ENCODE measurements at regions of chr3 and their contacts with region 1.

Region 1: GRCh38 chr3:40996382-40996781 is 202.9 kb upstream of the CTNNB1 start:
- DNase-seq: no peak
- H3K4me3 Mint-ChIP-seq: no peak overlapping the region
- H3K27ac Mint-ChIP-seq: no peak overlapping the region
- H3K4me1 Mint-ChIP-seq: no peaks in the 10 kb centered on the region
- H3K27me3 Mint-ChIP-seq: peaks cover 5% of the 10 kb centered on the region

Region 2: DNA sequence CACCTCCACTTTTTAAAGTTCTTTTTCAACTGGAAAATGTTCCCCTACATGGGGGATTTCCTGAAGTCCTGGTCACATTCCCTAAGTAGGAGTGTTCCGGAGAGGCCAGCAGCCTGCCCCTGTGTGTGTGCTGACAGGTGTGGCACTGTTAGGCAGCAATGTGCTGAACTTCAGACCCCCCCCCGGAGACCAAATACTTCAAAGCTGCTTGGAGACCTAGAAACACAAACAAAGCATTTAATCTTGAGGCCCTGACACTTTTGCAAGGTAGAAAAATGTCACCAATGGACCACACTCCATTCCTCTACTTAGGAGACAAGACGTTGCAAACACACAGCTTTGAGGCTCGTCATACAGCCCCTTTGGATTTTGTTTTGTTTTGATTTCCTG is 56.6 kb before region 1 on chr3:
- intact Hi-C with region 1: loop called (anchors 10 kb)
- DNase-seq: no peak
- H3K4me3 Mint-ChIP-seq: no peak overlapping the region
- H3K27ac Mint-ChIP-seq: no peak overlapping the region
- H3K4me1 Mint-ChIP-seq: no peaks in the 10 kb centered on the region
- H3K27me3 Mint-ChIP-seq: peaks cover 3% of the 10 kb centered on the region

Region 3: DNA sequence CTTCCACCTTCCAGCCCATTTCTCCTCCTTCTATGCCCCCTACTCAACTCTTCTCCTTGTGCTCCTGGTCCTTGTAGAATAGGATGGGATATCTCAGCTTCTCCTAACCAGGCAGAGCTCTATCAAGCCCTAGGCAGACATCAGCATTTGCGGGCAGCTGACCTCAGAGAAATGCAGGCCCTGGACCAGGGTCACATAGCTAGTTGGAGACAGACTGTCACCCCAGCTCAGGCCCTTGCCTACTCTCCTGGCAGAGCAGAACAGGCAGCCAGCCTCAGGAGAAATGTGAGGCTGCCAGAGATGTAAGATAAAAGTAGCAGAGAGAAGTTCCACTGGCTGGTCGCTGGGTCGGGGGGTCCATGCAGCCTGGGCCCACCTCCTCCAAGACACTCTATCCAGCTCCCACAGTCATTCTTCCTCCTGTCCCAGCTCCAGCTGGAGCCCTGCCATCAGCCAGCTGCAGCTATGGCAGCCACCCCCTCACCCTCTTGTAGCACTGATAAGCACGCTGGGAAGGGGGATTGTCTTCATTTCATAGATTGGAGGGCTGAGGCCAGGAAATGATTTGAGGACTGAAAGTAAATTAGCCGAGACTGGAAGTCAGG is 1875.3 kb after region 1 on chr3:
- intact Hi-C with region 1: no loop called
- DNase-seq: no peak
- H3K4me3 Mint-ChIP-seq: no peak overlapping the region
- H3K27ac Mint-ChIP-seq: no peak overlapping the region
- H3K4me1 Mint-ChIP-seq: no peaks in the 10 kb centered on the region
- H3K27me3 Mint-ChIP-seq: peaks cover 4% of the 10 kb centered on the region

Measured in activated CD4-positive, alpha-beta T cell treated with anti-CD3 and anti-CD28 coated beads, Interleukin-2, amount 10 ng/mL, durations not matched to agents 24 days and 14 days (primary cell).